HEK293 (cell line): ENCODE measurements at regions of chr2 and their contacts with region 1.

Region 1: GRCh38 chr2:219597552-219598307 is at the start of gene STK11IP:
- H3K4me3 ChIP-seq: peak within 1 kb of the TSS; percentile 84
- H3K27ac ChIP-seq: peak within 1 kb of the TSS; percentile 85
- H3K4me1 ChIP-seq: peaks cover 6% of the 10 kb centered on the region
- CTCF ChIP-seq: no peak

Region 2: GRCh38 chr2:219571311-219572236 is 26.2 kb before region 1 on chr2 and contains the start of gene OBSL1:
- CTCF ChIA-PET with region 1: interaction called, 3 read pairs
- POLR2A ChIA-PET with region 1: interaction called, 44 read pairs
- H3K4me3 ChIP-seq: peak within 1 kb of the TSS; percentile 91
- H3K27ac ChIP-seq: peak within 1 kb of the TSS; percentile 86
- H3K4me1 ChIP-seq: peaks cover 14% of the 10 kb centered on the region
- CTCF ChIP-seq: no peak; the same call in 1 of the 2 replicates